ENCODE measurements at regions of chr4 and their contacts with region 1.

Region 1: DNA sequence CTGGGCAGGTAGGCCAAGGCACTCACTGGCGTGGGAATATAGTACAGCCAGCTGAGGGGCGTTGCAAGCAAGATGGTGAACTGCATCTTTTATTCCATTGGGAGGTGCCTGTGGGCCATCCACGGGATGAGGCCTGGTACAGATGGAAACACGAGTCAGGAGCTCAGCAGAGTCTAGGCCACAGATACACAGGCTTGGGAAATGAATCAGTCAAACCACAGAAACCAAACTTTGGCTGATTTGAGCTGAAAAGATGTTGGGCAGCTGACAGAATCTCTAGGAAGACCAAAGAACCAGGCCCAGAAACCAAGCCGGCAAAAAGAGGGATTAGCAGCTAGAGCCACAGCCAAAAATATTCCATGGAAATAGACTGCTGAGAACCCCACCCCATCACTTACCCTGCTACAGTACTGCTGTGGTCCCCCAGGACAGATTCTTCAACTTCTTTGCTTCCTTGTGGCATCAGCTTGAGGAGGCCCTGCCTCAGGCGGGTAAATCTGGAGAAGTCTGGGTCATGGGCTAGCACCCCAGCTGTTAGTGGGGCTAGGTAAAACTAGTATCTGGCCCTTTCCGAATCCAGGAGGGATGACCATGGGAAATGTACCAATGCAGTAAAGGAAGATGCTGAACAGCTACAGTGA is 75.4 kb downstream of the TMEM131L start:
- DNase-seq: no peak
- ATAC-seq: peak; percentile 64
- H3K4me3 ChIP-seq: no peak overlapping the region
- H3K27ac ChIP-seq: no peak overlapping the region
- H3K4me1 ChIP-seq: peaks cover 21% of the 10 kb centered on the region
- H3K27me3 ChIP-seq: no peaks in the 10 kb centered on the region
- CTCF ChIP-seq: no peak
- EP300 ChIP-seq: no peak
- POLR2A ChIP-seq: no peak
- RAD21 ChIP-seq: no peak

Region 2: GRCh38 chr4:153521999-153522801 is 19.4 kb before region 1 on chr4:
- CTCF ChIA-PET with region 1: interaction called, 5 read pairs
- POLR2A ChIA-PET with region 1: interaction called, 11 read pairs
- RAD21 ChIA-PET with region 1: interaction called, 8 read pairs
- SMC1A ChIA-PET with region 1: interaction called, 13 read pairs
- in situ Hi-C with region 1: no loop called
- intact Hi-C with region 1: no loop called
- DNase-seq: peak; percentile 71
- ATAC-seq: peak; percentile 54
- H3K4me3 ChIP-seq: peak overlapping the region; percentile 59
- H3K27ac ChIP-seq: peak overlapping the region; percentile 96
- H3K4me1 ChIP-seq: peaks cover 85% of the 10 kb centered on the region
- H3K27me3 ChIP-seq: no peaks in the 10 kb centered on the region
- CTCF ChIP-seq: no peak
- EP300 ChIP-seq: no peak; a peak in 1 of 4 replicates
- POLR2A ChIP-seq: peak; percentile 56; the same call in 1 of the 2 replicates
- RAD21 ChIP-seq: no peak

Region 3: GRCh38 chr4:153528705-153529485 is 12.7 kb before region 1 on chr4:
- CTCF ChIA-PET with region 1: interaction called, 14 read pairs
- POLR2A ChIA-PET with region 1: interaction called, 11 read pairs
- RAD21 ChIA-PET with region 1: interaction called, 5 read pairs
- SMC1A ChIA-PET with region 1: interaction called, 48 read pairs
- in situ Hi-C with region 1: no loop called
- intact Hi-C with region 1: no loop called
- DNase-seq: no peak
- ATAC-seq: peak; percentile 73
- H3K4me3 ChIP-seq: peak overlapping the region; percentile 58
- H3K27ac ChIP-seq: peak overlapping the region; percentile 77
- H3K4me1 ChIP-seq: peaks cover 77% of the 10 kb centered on the region
- H3K27me3 ChIP-seq: no peaks in the 10 kb centered on the region
- CTCF ChIP-seq: no peak
- EP300 ChIP-seq: no peak
- POLR2A ChIP-seq: no peak
- RAD21 ChIP-seq: no peak